BJ (cell line): ENCODE measurements at regions of chr16 and their contacts with region 1.

Region 1: DNA sequence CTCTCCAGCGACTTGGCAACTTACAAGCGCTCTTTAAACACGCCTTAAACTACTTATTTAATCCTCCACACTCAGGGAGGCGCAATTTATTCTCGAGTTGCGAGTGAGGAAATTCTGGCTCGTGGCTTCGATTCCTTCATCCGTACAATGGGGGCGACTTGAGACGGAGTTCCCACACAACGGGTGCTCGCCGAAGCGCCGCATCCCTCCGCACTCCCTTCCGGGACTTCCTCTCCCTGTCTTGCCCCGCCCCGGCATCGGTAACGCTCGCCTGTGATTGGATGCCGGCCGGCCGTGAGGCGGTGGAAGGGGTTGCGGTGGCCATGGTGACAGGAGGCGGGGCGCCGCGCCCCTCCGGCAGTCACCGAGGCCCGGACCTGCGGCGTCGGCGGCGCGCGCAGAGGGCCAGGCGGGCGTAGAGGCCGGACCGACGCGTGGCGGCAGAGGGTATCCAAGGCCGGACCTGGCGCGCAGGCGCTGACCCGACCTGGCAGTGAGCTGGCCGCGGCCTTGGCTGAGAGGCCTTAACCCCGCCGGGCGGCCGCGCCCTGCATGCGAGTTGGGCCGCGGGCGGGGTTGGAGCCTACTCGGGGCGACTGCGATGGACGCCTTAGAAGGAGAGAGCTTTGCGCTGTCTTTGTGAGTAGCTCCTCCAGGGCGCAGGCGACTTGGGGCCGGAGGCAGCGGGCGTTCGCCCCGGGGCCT is at the start of gene ARL2BP:
- DNase-seq: peak; percentile 88
- H3K4me3 ChIP-seq: peak within 1 kb of the TSS; percentile 84
- H3K27me3 ChIP-seq: no peaks in the 10 kb centered on the region
- CTCF ChIP-seq: no peak
- polyA plus RNA-seq, gene ARL2BP: 69.5 and 94.8 TPM in 2 replicates

Region 2: DNA sequence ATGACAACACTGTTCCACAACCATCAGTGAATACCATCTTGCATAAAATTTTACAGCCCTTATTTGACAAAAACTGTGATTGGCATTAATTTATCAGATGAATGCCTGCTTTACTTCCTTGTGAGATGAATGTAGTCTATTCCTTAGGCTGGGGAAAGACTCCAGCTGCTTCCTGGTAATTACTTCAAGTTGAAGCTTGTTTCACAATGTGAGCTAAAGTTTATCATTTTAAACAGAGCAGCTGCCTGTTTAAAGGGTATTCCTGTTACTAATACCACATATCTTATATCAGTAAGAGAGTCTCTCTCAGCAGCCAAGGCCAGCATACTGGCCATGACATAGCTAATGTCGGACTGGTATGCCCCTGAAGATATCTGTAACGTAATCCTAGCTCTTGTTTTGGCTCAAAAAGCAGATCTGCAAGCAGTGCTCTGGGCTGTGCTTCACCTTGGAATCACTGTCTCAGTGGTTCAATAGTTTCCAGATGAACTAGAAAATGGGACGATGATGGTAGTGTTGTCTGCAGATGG is 13.0 kb before region 1 on chr16:
- CTCF ChIA-PET with region 1: no interaction called
- POLR2A ChIA-PET with region 1: interaction called, 22 read pairs
- DNase-seq: no peak
- H3K4me3 ChIP-seq: no peak overlapping the region
- H3K27me3 ChIP-seq: no peaks in the 10 kb centered on the region
- CTCF ChIP-seq: no peak

Region 3: DNA sequence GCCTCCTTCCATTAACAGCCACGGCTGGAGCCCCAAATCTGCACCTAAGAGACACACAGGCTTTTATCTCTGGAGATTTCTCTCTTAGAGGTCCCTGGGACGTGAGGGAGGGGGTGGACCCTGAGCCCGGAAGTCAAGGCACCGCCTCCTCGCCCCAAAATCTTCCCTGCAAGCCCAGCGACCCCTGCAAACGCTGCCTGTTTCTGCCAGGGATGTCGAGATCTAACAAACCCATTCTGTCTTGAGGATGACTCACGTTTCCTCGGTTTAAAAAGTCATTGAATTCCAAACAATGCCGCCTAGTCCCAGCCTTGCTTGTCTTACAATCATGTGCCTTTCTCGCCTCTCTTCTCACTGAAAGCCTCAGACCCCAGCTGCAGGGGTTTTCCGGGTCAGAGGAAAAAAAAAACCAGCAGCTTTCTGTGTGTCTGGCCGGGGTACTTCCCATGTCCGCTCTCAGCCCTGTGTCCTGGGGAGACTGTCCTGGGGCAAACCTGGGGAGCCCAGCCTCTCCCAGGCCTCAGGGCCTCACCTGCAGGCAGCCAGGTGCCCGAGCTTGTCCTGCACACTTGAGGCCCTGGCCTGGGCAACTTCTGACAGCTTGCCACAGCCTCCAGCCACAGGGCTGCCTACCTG is 15.5 kb after region 1 on chr16:
- CTCF ChIA-PET with region 1: no interaction called
- POLR2A ChIA-PET with region 1: no interaction called
- DNase-seq: peak; percentile 15
- H3K4me3 ChIP-seq: no peak overlapping the region
- H3K27me3 ChIP-seq: no peaks in the 10 kb centered on the region
- CTCF ChIP-seq: no peak

Region 4: DNA sequence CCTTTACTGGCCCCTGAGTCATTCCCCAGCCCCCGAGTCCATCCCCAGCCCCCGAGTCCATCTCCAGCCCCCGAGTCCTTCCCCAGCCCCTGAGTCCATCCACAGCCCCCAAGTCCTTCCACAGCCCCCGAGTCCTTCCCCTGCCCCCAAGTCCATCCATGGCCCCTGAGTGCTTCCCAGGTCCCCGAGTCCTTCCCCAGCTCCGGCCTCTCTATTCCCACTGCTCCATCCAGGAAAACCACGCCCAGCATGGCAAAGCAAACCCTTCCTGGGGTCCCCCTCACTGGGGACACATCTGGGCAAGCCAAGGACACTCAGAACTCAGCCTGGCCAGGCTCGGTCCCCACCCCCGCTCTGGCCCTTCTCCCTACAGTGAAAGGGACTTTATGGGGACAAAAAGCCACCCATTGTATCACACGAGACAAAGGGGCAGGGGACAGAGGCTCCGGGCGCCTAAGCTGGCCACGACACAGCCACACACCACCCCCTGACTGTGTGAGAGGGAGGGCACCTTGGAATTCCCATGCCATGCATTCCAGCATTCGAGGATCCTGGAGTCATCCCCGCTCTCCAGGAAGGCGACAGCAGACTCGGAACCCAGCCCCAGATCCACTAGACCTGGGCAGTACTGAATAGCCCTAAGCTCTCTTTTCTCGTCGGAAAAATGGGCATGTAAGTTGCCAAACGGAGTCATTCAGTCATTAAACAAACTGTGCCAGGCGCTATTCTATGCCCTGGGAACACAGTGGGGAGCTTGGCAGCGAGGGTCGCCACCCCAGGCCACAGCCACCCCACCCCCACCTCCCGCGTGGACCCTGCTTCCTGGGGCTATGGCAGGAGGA is 25.5 kb after region 1 on chr16:
- CTCF ChIA-PET with region 1: no interaction called
- POLR2A ChIA-PET with region 1: no interaction called
- DNase-seq: no peak
- H3K4me3 ChIP-seq: no peak overlapping the region
- H3K27me3 ChIP-seq: no peaks in the 10 kb centered on the region
- CTCF ChIP-seq: no peak

Region 5: GRCh38 chr16:57372372-57373116 is 127.6 kb after region 1 on chr16 and contains the start of gene CX3CL1:
- CTCF ChIA-PET with region 1: no interaction called
- POLR2A ChIA-PET with region 1: no interaction called
- DNase-seq: no peak
- H3K4me3 ChIP-seq: no peak within 1 kb of the TSS
- H3K27me3 ChIP-seq: peaks cover 25% of the 10 kb centered on the region
- CTCF ChIP-seq: 0 out of 2 replicates have a peak, but pooled peaks have one; percentile 9
- polyA plus RNA-seq, gene CX3CL1: 0.02 TPM in 1 of 2 replicates, not detected in the other